ENCODE measurements at regions of chr12 and their contacts with region 1.

Region 1: DNA sequence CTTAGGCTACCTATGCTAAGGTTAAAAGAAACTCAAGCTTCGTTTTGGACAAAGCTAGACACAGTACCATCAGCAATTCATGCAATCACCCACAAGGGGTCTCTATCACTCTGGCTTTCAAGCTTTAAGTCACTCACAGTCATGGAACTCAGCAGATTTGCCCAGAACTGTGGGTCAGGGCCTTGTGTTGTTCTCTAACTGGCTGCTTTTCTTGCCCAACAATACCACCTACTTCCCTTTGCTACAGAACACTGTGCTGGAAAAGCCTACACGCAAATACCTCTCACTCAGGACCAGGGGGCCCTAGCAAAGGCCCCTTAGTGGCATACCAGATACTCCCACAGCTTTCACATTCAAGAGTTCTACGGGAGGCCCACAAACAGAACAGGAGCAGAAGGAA is 9.1 kb downstream of the NEMP1 start:
- DNase-seq: no peak

Region 2: DNA sequence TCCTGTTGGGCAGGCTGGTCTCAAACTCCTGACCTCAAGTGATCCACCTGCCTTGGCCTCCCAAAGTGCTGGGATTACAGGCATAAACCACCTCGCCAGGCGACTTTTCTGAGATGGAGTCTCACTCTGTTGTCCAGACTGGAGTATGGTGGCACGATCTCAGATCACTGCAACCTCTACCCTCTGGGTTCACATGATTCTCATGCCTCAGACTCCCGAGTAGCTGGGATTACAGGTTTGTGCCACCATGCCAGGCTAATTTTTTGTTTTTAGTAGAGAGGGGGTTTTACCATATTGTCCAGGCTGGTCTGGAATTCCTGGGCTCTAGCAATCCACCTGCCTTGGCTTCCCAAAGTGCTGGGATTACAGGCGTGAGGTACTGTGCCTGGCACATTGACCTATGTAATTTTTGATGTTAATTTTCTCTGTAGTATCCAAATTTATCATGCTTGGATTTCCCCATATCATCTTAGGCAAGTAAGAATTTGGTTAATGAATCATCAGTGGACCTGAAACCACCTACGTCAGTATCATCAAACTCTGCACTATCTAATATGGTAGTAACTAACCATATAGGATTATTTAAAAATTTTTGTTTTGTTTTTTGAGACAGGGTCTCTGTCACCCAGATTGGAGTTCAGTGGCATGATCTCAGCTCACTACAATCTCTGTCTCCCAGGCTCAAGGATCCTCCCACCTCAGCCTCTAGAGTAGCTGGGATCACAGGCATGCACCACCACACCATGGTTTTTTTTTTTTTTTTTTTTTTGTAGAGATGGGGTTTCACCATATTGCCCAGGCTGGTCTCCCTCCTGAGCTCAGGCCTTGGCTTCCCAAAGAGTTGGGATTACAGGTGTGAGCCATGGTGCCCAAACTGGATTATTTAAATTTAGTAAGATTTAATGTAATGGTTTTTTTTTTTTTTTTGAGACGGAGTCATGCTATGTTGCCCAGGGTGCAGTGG is 411.8 kb before region 1 on chr12:
- intact Hi-C with region 1: no loop called
- DNase-seq: peak; percentile 5

Region 3: GRCh38 chr12:56763753-56764657 is 305.5 kb before region 1 on chr12:
- intact Hi-C with region 1: loop called in 1 of 2 experiments (anchors 5 kb)
- DNase-seq: no peak

Region 4: DNA sequence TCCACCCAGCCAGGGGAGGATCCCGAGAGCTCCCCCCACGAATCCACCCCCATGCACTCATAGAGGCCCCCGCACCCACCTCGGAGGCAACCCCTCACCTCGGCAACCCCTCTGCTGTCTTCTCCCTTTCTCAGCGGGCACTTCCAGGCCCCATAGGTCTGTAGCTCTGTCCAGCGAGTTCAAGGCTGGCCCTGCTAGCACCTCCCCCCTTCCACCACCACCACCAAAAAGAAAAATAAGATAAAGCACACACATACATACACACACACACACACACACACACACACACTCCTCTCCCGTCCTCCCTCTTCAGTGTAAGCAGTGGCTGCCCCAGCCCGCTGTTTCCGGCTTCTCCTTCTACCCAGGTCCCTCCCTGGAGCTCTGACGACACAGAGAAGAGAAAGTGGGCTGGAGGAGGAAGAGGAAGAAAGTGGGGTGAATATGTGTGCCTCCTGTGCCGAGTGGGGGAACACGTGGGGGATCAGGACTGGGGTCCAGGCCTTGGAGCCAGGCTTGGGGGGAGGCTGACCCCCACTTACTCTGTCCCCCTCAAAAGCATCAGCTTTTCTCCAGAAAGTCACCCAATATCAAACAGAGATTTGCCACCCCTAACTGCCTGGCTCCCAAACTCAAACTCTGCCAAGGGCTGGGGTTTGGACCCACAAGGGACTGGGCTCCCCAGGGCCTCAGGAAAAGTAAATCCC is 41.7 kb after region 1 on chr12 and contains the start of gene STAT6:
- intact Hi-C with region 1: loop called (anchors 5 to 10 kb)
- DNase-seq: peak; percentile 95
- total RNA-seq, gene STAT6: 162 to 201 TPM

Region 5: DNA sequence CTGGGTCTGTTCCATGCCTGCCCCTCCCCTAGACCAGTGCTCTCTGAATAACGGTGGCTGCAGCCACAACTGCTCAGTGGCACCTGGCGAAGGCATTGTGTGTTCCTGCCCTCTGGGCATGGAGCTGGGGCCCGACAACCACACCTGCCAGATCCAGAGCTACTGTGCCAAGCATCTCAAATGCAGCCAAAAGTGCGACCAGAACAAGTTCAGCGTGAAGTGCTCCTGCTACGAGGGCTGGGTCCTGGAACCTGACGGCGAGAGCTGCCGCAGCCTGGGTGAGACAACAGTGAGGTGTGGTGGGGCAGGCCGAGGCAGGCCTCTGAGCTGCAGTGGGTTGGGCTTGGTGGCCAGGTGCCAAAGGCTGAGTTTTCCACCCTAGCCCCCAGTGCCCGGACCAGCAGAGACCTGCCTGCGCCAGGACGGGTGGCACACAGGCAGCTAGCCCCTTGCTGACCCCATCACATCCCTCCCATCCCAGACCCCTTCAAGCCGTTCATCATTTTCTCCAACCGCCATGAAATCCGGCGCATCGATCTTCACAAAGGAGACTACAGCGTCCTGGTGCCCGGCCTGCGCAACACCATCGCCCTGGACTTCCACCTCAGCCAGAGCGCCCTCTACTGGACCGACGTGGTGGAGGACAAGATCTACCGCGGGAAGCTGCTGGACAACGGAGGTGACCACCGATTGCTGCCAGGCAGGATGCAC is 106.1 kb after region 1 on chr12:
- intact Hi-C with region 1: loop called in 1 of 2 experiments (anchors 5 kb)
- DNase-seq: peak; percentile 95

Region 6: DNA sequence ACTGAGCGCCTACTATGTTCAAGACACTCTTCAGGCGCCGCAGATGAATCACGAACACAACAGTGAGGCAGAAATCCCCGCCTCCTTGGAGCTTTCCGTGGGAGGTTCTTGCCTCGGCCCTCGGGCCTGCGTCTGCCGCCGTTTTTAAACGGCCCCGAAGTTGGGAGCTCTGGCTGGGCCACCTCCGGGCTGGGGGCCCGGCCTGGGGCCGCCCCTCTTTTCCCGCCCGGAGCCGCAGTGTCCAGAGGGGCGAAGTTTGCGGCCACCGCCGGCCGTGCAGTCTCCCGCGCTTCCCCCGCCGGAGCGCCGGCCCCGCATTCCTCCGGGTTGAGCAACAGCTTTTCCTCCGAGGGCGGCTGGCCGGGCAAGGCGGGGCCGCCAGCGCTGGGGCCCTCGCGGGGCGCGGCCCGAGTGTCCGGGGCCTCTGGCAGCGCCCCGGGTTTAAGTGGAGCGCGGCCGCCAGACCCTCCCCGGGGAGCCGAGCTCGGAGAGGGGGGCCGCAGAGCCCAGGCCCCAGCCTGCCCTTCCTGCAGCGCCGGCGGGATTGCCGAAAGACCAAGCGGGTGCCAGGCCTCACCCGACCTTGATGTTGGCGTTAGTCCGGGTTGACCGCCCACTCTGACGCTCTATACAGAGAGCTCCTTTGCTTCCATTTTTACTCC is 795.7 kb after region 1 on chr12:
- intact Hi-C with region 1: no loop called
- DNase-seq: peak; percentile 95

Measured in posterior vena cava (tissue), 2 donors.